Esophagus muscularis mucosa (tissue), 4 donors: ENCODE measurements at regions of chr6 and their contacts with region 1.

Region 1: GRCh38 chr6:139375232-139376016 is 976 bp upstream of the CITED2 start:
- DNase-seq: peak; percentile 97
- H3K4me3 ChIP-seq: peak overlapping the region; percentile 80 to 91 (median 85)
- H3K27ac ChIP-seq: peak overlapping the region; percentile 90 to 96 (median 95)
- H3K4me1 ChIP-seq: peaks cover 11 to 29% (median 16%) of the 10 kb centered on the region in 4 donors
- H3K27me3 ChIP-seq: no peaks in the 10 kb centered on the region
- CTCF ChIP-seq: peak in 1 of 3 experiments; percentile 15
- EP300 ChIP-seq: peak; percentile 2
- POLR2A ChIP-seq: peak; percentile 30

Region 2: DNA sequence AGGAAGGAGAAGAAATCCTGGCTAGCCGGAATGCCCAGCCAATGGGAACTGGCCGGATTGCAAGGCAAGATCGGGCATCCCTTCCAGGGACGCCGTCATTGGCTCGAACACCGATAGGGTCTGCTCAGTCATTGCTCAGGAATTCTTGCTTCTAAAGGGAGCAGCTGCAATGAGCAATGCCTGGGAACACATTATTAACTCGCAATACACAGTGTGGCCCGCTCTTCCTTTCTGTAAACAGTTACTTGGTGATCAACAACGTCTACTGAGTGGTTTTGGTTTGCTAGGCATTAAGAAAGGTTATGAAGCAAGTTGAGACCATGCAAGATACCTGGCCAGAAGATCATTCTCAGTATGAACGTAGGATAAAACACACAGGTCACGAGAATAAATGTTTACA is 164.4 kb after region 1 on chr6:
- intact Hi-C with region 1: loop called (anchors 5 kb)
- DNase-seq: no peak
- H3K4me3 ChIP-seq: no peak overlapping the region
- H3K27ac ChIP-seq: peak overlapping the region; percentile 18 to 63 (median 42)
- H3K4me1 ChIP-seq: peaks cover 0 to 58% (median 47%) of the 10 kb centered on the region in 4 donors
- H3K27me3 ChIP-seq: no peaks in the 10 kb centered on the region
- CTCF ChIP-seq: no peak
- EP300 ChIP-seq: no peak
- POLR2A ChIP-seq: no peak

Region 3: DNA sequence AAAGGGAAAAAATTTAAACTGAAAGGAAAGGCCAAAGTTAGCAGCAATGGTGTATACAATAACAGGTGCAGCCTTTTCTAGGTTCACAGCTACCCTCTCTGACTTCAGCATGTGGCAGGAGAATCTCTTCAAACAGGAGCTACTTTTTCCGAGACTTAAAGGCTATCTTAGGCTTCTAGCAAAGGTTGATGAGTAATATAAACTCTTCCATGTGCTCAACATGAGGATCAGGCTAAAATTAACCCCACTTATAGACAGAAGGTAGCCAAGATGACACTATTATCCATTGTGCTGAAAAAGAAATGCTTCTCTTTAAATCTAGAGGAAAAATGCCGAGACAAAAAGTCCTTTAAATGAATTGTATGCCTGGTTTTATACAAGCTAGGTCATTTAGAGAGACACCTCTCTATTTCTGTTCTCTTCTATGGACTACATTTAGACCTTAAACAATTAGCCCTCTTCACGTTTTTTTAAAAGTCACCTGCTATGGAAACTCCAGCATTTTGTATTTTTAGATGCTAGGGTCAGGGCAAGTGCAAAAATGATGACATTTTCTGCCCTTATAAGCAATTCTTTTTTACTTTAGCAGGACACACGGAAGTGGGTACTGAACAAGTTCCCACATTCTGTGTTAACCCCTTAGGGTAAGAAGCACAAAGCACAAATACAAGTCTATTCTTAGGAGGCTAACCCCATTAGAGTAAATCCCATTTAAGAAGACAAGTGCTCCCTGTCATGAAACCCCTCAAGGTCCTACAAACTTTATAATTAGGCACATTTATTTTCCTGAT is 215.8 kb after region 1 on chr6:
- intact Hi-C with region 1: loop called (anchors 2 kb)
- DNase-seq: peak; percentile 5
- H3K4me3 ChIP-seq: peak overlapping the region in 1 of 4 donors; percentile 9
- H3K27ac ChIP-seq: peak overlapping the region; percentile 83 to 86 (median 83)
- H3K4me1 ChIP-seq: peaks cover 35 to 90% (median 81%) of the 10 kb centered on the region in 4 donors
- H3K27me3 ChIP-seq: no peaks in the 10 kb centered on the region
- CTCF ChIP-seq: no peak
- EP300 ChIP-seq: no peak
- POLR2A ChIP-seq: no peak

Region 4: GRCh38 chr6:139644821-139645220 is 269.4 kb after region 1 on chr6:
- intact Hi-C with region 1: loop called (anchors 5 kb)
- DNase-seq: no peak
- H3K4me3 ChIP-seq: no peak overlapping the region
- H3K27ac ChIP-seq: peak overlapping the region; percentile 57 to 70 (median 64)
- H3K4me1 ChIP-seq: peaks cover 17 to 40% (median 26%) of the 10 kb centered on the region in 4 donors
- H3K27me3 ChIP-seq: no peaks in the 10 kb centered on the region
- CTCF ChIP-seq: no peak
- EP300 ChIP-seq: peak; percentile 71
- POLR2A ChIP-seq: no peak

Region 5: GRCh38 chr6:139764498-139764986 is 389.1 kb after region 1 on chr6:
- intact Hi-C with region 1: loop called (anchors 5 kb)
- DNase-seq: no peak
- H3K4me3 ChIP-seq: no peak overlapping the region
- H3K27ac ChIP-seq: peak overlapping the region; percentile 77 to 87 (median 82)
- H3K4me1 ChIP-seq: peaks cover 25 to 40% (median 33%) of the 10 kb centered on the region in 4 donors
- H3K27me3 ChIP-seq: no peaks in the 10 kb centered on the region
- CTCF ChIP-seq: no peak
- EP300 ChIP-seq: no peak
- POLR2A ChIP-seq: no peak

Region 6: DNA sequence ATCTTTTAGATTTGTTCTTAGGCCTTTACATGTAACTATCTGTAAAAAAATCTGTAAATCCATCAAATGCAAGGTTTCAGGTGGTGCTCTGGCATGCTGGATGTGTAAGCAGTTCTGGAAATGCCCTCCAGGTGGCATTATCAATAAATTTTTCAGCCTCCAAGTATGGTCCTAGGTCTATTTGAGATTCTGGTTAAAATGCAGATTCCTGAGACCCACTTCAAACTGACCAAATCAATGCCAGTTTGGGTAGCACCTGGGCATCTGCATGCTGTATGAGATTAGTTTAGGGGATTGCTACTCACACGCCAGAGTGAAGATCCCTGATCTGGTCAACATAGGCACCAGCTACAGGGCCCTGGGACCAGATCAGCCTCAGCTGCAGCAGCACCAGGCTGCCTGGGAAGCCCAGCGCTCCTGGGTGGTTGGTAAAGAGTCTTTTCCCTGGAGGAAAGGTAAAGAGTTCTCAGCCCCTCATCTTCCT is 506.3 kb after region 1 on chr6:
- intact Hi-C with region 1: loop called (anchors 10 kb)
- DNase-seq: no peak
- H3K4me3 ChIP-seq: no peak overlapping the region
- H3K27ac ChIP-seq: peak overlapping the region in 3 of 4 donors; percentile 21 to 63 (median 50)
- H3K4me1 ChIP-seq: peaks cover 18 to 24% (median 22%) of the 10 kb centered on the region in 4 donors
- H3K27me3 ChIP-seq: no peaks in the 10 kb centered on the region
- CTCF ChIP-seq: peak; percentile 43 to 63 (median 44)
- EP300 ChIP-seq: no peak
- POLR2A ChIP-seq: no peak

Region 7: DNA sequence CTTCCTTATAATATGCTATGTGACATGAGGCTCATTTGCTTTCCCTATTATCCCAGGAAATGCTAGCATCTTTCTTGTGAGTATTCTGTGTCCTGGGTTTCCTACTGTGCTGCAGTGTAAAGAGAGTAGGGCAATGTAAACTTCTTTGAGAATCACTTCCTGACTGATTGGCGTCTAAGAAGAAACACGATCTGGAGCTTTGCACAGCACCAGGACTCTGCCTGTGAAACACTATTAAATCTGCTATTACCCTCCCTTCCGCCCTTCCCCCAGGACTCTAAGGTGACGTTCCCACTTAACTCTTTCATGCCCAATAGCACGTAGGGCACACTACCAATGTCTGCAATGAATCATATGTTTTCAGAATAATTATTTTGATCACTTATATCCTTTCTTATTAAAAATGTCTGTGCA is 606.4 kb after region 1 on chr6:
- intact Hi-C with region 1: loop called (anchors 5 kb)
- DNase-seq: no peak
- H3K4me3 ChIP-seq: no peak overlapping the region
- H3K27ac ChIP-seq: peak overlapping the region; percentile 74 to 81 (median 78)
- H3K4me1 ChIP-seq: peaks cover 33 to 64% (median 55%) of the 10 kb centered on the region in 4 donors
- H3K27me3 ChIP-seq: no peaks in the 10 kb centered on the region
- CTCF ChIP-seq: no peak
- EP300 ChIP-seq: no peak
- POLR2A ChIP-seq: no peak